Left colon (tissue), 2 donors: ENCODE measurements at regions of chr16 and their contacts with region 1.

Region 1: GRCh38 chr16:49407873-49408550 is 34.4 kb downstream of the C16orf78 start:
- DNase-seq: peak; percentile 82 to 88
- ATAC-seq: peak; percentile 100

Region 2: GRCh38 chr16:49596068-49596467 is 188.1 kb after region 1 on chr16:
- intact Hi-C with region 1: loop called in 1 of 2 experiments (anchors 5 kb)
- DNase-seq: no peak
- ATAC-seq: no peak

Region 3: GRCh38 chr16:49921791-49922456 is 513.9 kb after region 1 on chr16:
- intact Hi-C with region 1: loop called in 1 of 2 experiments (anchors 5 kb)
- DNase-seq: peak; percentile 58 to 82
- ATAC-seq: peak; percentile 98